ENCODE measurements at regions of chr2 and their contacts with region 1.

Region 1: GRCh38 chr2:168999668-169000213 is 31.4 kb downstream of the ABCB11 start:
- DNase-seq: no peak
- H3K4me3 ChIP-seq: no peak overlapping the region
- H3K27ac ChIP-seq: no peak overlapping the region
- H3K4me1 ChIP-seq: no peaks in the 10 kb centered on the region
- CTCF ChIP-seq: no peak

Region 2: DNA sequence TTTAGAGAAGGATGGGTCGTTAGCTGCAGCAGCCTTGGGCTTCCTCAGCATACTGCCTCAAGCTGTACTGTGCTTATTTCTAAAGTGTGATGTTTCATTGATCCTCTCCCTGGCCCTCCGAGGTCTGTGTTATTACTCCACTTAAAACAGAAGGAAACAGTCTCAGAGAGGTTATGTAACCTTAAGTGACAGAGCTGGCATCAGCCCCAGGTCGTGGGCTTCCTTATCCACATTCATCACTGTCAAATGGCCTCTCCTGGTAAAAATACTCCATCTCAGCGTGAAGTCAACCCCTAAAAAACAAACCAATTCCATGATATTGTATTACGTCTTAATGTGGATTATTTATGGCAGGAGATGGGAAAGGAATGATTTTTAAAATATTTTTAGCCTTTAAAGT is 350.6 kb before region 1 on chr2:
- CTCF ChIA-PET with region 1: no interaction called
- POLR2A ChIA-PET with region 1: interaction called, 12 read pairs
- intact Hi-C with region 1: no loop called
- DNase-seq: no peak
- H3K4me3 ChIP-seq: no peak overlapping the region
- H3K27ac ChIP-seq: no peak overlapping the region
- H3K4me1 ChIP-seq: no peaks in the 10 kb centered on the region
- CTCF ChIP-seq: no peak

Region 3: DNA sequence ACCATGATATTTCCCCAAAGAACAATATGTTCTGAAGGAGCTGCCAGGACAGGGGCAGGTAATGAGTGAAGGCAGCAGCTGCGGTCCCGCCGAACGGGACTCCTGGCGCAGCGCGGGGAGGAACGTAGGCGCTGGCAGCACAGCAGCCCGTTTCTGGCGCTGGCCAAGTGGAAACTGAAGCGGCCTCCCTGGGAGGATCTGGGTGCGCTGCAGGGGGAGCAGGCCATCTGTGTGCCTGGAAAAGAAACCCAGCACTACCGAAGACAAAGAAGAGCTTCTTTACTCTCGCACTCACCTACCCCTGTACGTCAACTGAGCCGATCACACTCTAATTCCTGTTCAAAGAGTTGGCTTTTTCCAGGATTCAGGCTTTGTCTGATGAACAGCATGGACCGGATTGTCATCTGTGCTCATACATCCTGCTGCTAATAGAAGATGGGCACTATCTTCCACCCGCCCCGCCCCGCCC is 86.8 kb before region 1 on chr2:
- CTCF ChIA-PET with region 1: no interaction called
- POLR2A ChIA-PET with region 1: no interaction called
- intact Hi-C with region 1: no loop called
- DNase-seq: no peak
- H3K4me3 ChIP-seq: no peak overlapping the region
- H3K27ac ChIP-seq: no peak overlapping the region
- H3K4me1 ChIP-seq: no peaks in the 10 kb centered on the region
- CTCF ChIP-seq: no peak

Measured in OCI-LY7 (cell line).